PC-3 (cell line): ENCODE measurements at regions of chr4 and their contacts with region 1.

Region 1: GRCh38 chr4:152850377-152850776 is 70.6 kb downstream of the ARFIP1 start:
- DNase-seq: peak; percentile 41
- ATAC-seq: no peak; the same call in 1 of the 2 replicates
- H3K4me3 ChIP-seq: no peak overlapping the region
- H3K27ac ChIP-seq: no peak overlapping the region
- H3K4me1 ChIP-seq: peaks cover 10% of the 10 kb centered on the region
- H3K27me3 ChIP-seq: no peaks in the 10 kb centered on the region
- CTCF ChIP-seq: no peak

Region 2: DNA sequence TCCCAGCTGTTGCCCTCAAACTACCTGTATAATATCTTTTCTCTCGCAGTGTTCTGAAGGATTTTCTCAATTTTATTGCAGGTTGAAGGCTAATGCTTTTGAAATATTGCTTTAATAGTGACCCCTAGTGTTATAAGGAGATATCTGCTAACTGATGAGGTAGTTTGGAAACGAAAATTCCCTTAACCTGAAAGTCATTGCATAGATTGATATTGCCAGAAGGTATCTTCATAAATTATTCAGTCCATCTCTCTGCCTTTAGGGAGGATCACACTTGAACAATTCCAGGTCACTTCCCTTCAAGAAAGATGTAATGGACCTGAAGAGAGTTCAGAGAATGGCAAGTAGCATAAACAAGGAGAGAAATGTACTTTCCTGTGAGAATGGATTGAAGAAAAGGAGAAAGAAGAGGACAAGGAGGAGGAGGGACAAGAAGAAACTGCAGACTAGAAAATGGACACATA is 114.9 kb before region 1 on chr4:
- CTCF ChIA-PET with region 1: no interaction called
- POLR2A ChIA-PET with region 1: no interaction called
- intact Hi-C with region 1: no loop called
- DNase-seq: peak; percentile 61
- ATAC-seq: peak; percentile 53
- H3K4me3 ChIP-seq: no peak overlapping the region
- H3K27ac ChIP-seq: no peak overlapping the region
- H3K4me1 ChIP-seq: no peaks in the 10 kb centered on the region
- H3K27me3 ChIP-seq: no peaks in the 10 kb centered on the region
- CTCF ChIP-seq: peak; percentile 70

Region 3: DNA sequence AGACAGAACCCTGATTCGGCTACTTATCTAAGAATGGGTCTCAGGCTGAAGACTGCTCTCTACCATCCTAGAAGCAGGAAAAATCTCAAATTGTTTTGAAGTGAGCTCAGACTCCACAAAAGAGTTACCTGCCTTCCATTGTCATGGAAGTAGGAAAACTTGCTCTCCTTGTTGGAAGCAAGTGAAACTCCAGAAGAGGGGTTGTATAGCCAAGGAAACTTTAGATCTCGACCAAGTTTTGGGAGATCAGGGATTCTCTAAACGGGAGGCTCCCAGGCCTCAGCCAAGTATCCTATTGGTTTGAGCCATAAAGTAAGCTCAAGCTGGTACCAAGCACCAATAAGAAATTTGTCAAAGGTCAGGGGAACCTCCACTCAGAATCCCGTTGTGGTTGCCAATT is 76.6 kb after region 1 on chr4:
- CTCF ChIA-PET with region 1: no interaction called
- POLR2A ChIA-PET with region 1: no interaction called
- intact Hi-C with region 1: no loop called
- DNase-seq: no peak
- ATAC-seq: no peak
- H3K4me3 ChIP-seq: no peak overlapping the region
- H3K27ac ChIP-seq: no peak overlapping the region
- H3K4me1 ChIP-seq: no peaks in the 10 kb centered on the region
- H3K27me3 ChIP-seq: no peaks in the 10 kb centered on the region
- CTCF ChIP-seq: no peak

Region 4: DNA sequence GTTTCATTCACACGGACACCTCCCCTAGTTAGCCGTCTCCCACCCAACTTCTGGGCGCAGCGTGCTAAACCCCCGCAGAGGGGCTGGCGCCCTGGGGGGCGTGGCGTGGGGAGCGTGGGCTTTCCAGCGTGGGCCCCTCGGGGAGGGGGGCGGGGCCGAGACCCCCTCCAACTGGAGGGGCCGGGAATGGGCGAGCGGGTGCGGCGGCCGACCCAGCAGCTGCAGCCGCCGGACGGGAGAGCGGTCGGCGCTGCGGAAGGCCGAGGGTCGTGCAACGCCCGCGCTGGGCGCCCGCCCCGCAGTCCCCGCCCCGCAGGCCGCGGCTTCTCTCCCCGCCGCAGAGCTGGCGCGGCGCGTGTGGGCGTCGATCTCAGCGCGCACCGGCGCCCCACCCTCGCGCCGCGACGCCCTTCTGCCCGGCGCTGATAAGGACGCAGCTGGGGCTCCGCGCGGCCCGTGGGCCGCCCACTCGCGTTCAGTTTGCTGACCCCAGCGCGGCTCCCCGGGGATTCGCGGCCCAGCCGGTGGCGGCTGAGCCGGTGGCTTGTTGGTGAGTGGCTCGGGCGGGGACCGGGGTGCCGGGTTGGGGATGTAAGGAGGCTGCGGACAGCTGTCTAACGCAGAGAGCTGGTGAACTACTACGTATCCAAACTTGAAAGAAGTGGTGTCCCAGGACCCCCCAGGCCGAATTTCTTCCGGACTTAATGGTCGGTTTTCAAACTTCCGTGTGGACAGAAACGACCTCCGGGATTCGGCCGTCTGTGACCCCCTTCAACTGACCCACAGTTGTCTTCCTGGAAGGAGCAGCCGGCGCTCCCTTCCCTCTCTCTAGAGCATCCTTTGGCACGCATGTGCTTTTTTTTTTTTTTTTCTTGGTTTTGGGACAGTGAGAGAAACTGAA is 87.2 kb after region 1 on chr4:
- CTCF ChIA-PET with region 1: no interaction called
- POLR2A ChIA-PET with region 1: no interaction called
- intact Hi-C with region 1: loop called (anchors 5 kb)
- DNase-seq: no peak
- ATAC-seq: no peak
- H3K4me3 ChIP-seq: peak overlapping the region; percentile 85
- H3K27ac ChIP-seq: no peak overlapping the region
- H3K4me1 ChIP-seq: peaks cover 9% of the 10 kb centered on the region
- H3K27me3 ChIP-seq: no peaks in the 10 kb centered on the region
- CTCF ChIP-seq: no peak

Region 5: GRCh38 chr4:153083447-153083947 is 233.1 kb after region 1 on chr4:
- CTCF ChIA-PET with region 1: no interaction called
- POLR2A ChIA-PET with region 1: no interaction called
- intact Hi-C with region 1: loop called (anchors 1 kb)
- DNase-seq: peak; percentile 80
- ATAC-seq: peak; percentile 84
- H3K4me3 ChIP-seq: no peak overlapping the region
- H3K27ac ChIP-seq: no peak overlapping the region
- H3K4me1 ChIP-seq: no peaks in the 10 kb centered on the region; the same call in 1 of the 2 replicates
- H3K27me3 ChIP-seq: no peaks in the 10 kb centered on the region
- CTCF ChIP-seq: peak; percentile 68